Left ventricle myocardium inferior (tissue), 1 donor: ENCODE measurements at regions of chr1 and their contacts with region 1.

Region 1: GRCh38 chr1:224116131-224116530 is 2.2 kb downstream of the FBXO28 start:
- DNase-seq: no peak
- H3K4me3 ChIP-seq: peak overlapping the region; percentile 89
- H3K27ac ChIP-seq: no peak overlapping the region
- H3K4me1 ChIP-seq: peaks cover 35% of the 10 kb centered on the region
- H3K27me3 ChIP-seq: no peaks in the 10 kb centered on the region
- CTCF ChIP-seq: peak; percentile 70

Region 2: DNA sequence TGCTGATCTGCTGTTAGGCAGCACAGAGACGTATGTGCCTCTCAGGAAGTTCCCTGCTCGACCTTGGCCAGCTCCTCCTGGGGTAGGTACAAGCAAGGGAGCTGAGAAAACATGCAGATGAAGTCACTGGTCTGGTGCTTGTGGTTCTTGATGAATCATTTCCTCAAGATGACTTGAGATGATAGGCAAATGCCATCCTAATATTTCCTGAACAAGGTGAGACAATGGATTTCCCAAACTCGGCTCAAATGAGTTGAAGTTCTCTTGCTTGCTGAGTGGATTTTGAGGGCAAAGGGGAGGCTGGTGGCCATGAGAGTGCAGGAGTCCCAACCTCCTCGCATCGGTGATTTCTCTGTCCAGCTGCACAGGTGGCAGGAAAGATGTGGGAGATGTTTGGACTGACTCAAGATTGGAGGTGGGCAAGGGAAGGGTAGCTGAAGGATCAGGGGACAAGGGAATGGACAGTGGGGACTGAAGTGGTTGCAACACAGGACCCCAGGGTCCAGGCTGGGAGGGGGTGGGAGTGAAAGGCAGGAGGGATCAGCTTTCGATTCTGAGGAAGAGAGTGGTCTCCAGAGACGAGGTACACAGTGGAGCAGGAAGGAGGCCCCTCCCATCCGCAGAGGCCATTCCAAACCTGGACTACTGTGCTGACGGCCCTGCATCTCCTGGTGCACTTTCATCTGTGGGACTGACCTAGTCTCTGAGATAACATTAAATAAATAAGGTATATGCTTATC is 339.9 kb before region 1 on chr1:
- intact Hi-C with region 1: no loop called
- DNase-seq: no peak
- H3K4me3 ChIP-seq: no peak overlapping the region
- H3K27ac ChIP-seq: peak overlapping the region; percentile 74
- H3K4me1 ChIP-seq: peaks cover 68% of the 10 kb centered on the region
- H3K27me3 ChIP-seq: no peaks in the 10 kb centered on the region
- CTCF ChIP-seq: no peak

Region 3: DNA sequence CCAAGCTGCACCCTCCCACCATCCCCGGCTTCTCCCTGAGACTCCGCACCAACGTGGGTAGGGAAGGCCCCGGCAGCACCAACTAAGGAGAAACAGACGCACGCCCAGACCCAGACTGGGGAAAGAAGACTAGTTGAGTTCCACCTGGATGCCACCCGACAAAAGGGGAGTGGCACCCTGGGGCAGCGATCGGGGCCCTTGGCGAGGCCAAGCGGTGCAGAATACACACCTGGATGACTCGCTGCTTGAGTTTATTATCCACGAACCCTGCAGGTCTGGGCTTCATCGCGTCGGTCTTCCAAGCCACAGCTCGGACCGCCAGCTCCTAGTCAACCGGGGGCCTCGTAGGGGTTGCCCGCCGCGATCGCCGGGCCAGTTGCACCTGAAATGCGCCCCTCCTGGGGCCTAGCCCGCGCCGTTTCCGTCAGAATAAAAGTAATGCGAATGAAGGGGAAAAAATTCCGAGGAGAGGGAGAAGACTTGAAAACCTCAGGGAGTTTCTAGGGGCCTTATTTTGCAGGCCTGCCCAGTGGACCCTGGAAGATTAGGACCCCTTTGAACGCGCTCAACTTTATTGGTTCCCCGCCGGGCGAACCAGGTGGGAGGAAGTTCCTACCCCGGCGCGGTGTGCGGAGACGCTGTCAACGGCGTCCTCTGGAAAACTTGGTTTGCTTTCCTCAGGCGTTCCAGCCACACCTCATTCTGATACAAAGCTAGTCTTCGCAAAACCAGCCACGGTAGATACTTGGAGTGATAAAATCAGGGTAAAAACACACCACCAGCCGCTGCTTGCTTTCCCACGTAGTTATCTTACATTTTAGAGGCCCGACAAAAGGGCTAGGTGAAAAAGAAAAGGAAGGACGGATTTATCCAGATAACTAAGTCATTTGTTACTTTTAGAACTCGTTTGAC is 214.0 kb after region 1 on chr1 and contains the start of gene NVL:
- intact Hi-C with region 1: loop called (anchors 5 kb)
- DNase-seq: peak; percentile 81
- H3K4me3 ChIP-seq: peak within 1 kb of the TSS; percentile 78
- H3K27ac ChIP-seq: peak within 1 kb of the TSS; percentile 97
- H3K4me1 ChIP-seq: peaks cover 34% of the 10 kb centered on the region
- H3K27me3 ChIP-seq: no peaks in the 10 kb centered on the region
- CTCF ChIP-seq: peak; percentile 7
- total RNA-seq, gene NVL: 10.3 TPM